ENCODE measurements at regions of chr13 and their contacts with region 1.

Region 1: GRCh38 chr13:30306762-30307193 is 573 bp downstream of the KATNAL1 start:
- DNase-seq: peak; percentile 94 to 97
- ATAC-seq: peak; percentile 96 to 98 (median 98)
- H3K4me3 ChIP-seq: peak overlapping the region; percentile 89 to 99 (median 97)
- H3K27ac ChIP-seq: peak overlapping the region; percentile 78 to 98 (median 96)
- H3K4me1 ChIP-seq: peaks cover 0 to 63% (median 49%) of the 10 kb centered on the region in 9 donors
- H3K27me3 ChIP-seq: no peaks in the 10 kb centered on the region
- CTCF ChIP-seq: no peak

Region 2: GRCh38 chr13:30289533-30289932 is 17.2 kb before region 1 on chr13:
- intact Hi-C with region 1: loop called in 1 of 10 experiments (anchors 1 kb)
- DNase-seq: no peak
- ATAC-seq: no peak
- H3K4me3 ChIP-seq: no peak overlapping the region
- H3K27ac ChIP-seq: no peak overlapping the region
- H3K4me1 ChIP-seq: peaks cover 0 to 46% (median 8%) of the 10 kb centered on the region in 9 donors
- H3K27me3 ChIP-seq: no peaks in the 10 kb centered on the region
- CTCF ChIP-seq: no peak

Region 3: DNA sequence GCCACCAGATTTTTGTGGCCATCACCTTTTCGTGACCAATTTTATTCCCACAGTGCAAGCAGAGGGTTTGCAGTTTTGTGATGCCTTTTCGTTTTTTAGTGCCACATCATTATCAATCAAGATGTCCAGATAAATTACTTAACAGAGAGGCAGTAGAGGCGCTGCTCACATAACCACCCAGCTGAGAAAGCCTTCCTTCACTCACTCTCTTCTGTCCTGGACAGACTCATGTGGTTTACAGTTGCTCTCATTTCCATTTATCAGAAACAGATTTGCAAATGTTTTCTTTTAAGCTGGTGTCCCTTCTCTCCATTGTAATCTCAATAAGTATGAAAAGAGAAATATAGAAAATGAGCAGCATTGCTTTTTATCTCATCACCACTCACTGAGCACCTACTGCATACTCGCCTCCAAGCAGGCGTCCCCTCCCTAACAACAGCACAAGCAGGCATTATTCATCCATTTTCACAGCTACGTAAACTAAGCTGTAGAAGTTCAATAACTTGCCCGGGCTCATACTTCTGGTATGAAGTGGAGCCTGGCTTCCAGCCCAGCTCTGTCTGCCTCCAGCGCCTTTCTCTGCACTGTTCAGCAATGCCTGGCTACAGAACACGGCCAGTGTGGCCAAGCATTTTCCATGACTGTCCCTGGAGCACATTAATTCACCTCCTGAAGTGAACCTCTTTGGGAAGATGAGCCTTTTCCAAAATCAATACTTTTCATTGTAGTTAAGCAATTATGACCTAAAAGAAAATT is 35.2 kb after region 1 on chr13:
- intact Hi-C with region 1: loop called in 1 of 10 experiments (anchors 5 kb)
- DNase-seq: peak; percentile 81
- ATAC-seq: peak; percentile 84 to 93 (median 88)
- H3K4me3 ChIP-seq: no peak overlapping the region
- H3K27ac ChIP-seq: peak overlapping the region; percentile 10 to 89 (median 77)
- H3K4me1 ChIP-seq: peaks cover 2 to 46% (median 32%) of the 10 kb centered on the region in 9 donors
- H3K27me3 ChIP-seq: no peaks in the 10 kb centered on the region
- CTCF ChIP-seq: no peak

Region 4: DNA sequence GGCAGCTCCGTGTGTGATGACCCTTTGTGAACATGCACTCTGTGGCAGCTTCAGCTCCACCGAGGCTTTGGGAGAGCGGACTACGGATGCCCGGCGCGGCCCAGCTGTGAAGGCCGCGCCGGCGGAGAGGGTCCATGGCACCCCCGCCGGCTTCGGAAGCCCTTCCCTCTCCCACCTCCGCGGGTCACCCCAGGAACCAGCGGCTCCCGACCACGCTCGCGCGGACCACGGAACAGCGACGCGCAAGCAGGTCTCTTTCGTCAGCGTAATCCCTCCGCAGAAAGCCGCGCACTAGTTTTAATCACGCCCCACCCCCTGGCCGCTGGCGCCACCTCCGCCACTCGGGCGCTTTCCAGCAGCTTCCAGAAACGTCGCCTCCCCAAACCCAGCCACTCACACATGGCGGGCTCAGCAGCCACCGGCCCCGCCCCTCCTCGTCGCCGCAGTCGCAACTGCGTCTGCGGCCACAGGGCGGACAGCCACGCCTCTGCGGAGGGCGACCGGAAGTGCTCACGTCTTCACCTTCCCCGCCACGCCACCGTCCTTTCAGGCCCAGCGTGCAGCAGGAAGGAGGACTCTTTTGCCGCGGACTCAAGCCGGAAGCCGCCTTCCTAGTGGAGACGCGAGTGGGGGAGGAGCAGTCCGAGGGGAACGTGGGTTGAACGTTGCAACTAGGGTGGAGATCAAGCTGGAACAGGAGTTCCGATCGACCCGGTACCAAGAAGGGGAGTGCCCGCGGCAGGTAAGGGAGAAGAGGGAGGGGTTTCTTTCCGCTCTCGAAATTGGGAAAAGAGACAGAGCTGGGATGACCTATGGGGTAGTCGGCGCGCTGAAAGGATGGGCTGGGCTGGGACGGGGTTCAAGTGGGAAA is 310.8 kb after region 1 on chr13 and contains the start of gene USPL1:
- intact Hi-C with region 1: loop called in 4 of 10 experiments (anchors 5 to 10 kb)
- DNase-seq: peak; percentile 98 to 99
- ATAC-seq: peak; percentile 95 to 99 (median 97)
- H3K4me3 ChIP-seq: peak within 1 kb of the TSS; percentile 63 to 91 (median 80)
- H3K27ac ChIP-seq: peak within 1 kb of the TSS; percentile 96 to 100 (median 99)
- H3K4me1 ChIP-seq: peaks cover 0 to 44% (median 27%) of the 10 kb centered on the region in 9 donors
- H3K27me3 ChIP-seq: no peaks in the 10 kb centered on the region
- CTCF ChIP-seq: peak in 8 of 9 donors; percentile 14 to 47 (median 38)
- total RNA-seq, gene USPL1: 8.9 to 10.6 (median 9.8) TPM

Measured in heart right ventricle (tissue), 16 donors.